PC-9 (cell line): ENCODE measurements at regions of chr5 and their contacts with region 1.

Region 1: GRCh38 chr5:40755407-40756365 is at the start of gene TTC33:
- DNase-seq: peak; percentile 90 to 99
- H3K4me3 ChIP-seq: peak within 1 kb of the TSS; percentile 79
- H3K27ac ChIP-seq: peak within 1 kb of the TSS; percentile 36
- H3K4me1 ChIP-seq: peaks cover 11% of the 10 kb centered on the region
- H3K27me3 ChIP-seq: no peaks in the 10 kb centered on the region
- CTCF ChIP-seq: peak; percentile 76
- total RNA-seq, gene TTC33: 29.4 and 30.2 TPM in 2 replicates

Region 2: DNA sequence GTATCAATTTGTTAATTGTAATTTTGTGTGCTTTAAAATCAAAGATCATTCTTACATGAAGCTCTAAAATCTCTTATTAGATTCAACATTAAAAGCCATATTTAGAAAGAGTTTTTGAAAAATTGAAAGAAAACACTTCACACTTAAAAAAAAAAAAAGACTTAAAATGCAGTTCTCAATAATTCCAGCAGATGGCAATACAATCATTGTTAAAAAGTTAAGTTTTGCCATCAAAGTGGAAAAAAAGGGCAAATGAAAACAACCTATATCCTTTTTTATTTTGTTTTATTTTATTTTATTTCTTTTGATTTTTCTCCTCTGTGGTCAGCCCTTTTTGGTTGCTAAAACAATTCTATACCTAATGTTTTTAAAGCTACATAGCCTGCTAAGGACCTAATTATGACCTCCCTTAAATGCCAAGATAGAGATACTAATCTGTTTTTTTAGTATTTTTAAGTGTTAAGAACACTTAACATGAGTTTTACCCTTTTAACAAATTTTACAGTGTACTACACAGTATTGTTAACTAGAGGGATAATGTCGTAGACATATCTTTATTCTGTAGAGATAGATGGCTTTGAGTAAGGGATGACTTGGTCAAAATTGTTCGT is 1176.7 kb before region 1 on chr5:
- CTCF ChIA-PET with region 1: no interaction called
- POLR2A ChIA-PET with region 1: no interaction called
- intact Hi-C with region 1: loop called (anchors 1 kb)
- DNase-seq: no peak
- H3K4me3 ChIP-seq: no peak overlapping the region
- H3K27ac ChIP-seq: no peak overlapping the region
- H3K4me1 ChIP-seq: no peaks in the 10 kb centered on the region
- H3K27me3 ChIP-seq: no peaks in the 10 kb centered on the region
- CTCF ChIP-seq: peak; percentile 92

Region 3: DNA sequence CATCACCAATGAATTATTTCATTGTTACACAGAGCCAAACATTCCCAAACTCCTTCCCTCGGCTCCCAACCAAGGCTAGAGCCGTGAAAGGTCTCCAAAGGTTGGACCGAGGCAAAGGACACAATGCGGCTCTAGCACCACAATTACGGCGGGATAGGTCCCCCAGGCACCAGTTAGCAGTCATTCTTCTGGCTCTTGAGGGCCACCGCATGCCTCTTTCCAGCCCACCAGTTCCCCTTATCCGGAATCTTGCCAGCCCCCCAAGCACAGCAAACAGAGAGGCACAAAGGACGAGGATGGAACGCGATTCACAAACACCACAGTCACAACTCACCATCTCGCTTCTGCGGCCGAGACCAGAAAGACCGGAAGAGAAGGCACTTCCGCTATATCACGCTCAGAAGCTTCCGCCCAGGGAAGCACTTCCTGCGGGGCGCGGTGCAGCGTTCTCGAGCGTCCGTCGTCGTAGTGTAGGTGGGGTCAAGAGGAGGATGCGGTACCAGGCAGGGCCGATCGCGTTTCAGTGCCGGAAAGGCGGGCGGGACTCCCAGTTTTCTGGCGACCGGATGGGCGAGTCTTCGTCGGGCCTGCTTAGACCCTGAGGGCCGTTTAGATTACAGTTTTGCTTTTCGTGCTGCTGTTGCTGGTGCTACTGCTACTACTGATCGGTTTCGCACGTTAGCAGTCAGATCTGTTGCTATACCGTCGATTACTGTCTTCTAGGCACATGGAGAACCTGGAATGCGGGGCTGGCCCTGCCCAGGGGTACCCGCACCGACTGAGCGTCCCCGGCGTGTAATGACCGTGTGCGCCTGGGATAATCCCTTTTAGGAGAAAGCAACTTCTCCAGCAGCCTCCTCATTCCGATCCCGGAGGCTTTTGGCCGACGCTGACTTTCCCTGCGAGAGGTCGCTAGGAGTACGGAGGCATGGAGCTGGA is 79.4 kb after region 1 on chr5 and contains the start of gene RPL37:
- CTCF ChIA-PET with region 1: no interaction called
- POLR2A ChIA-PET with region 1: no interaction called
- intact Hi-C with region 1: loop called (anchors 1 kb)
- DNase-seq: peak; percentile 97 to 100
- H3K4me3 ChIP-seq: peak within 1 kb of the TSS; percentile 86
- H3K27ac ChIP-seq: peak within 1 kb of the TSS; percentile 96
- H3K4me1 ChIP-seq: peaks cover 43% of the 10 kb centered on the region
- H3K27me3 ChIP-seq: no peaks in the 10 kb centered on the region
- CTCF ChIP-seq: no peak
- total RNA-seq, gene RPL37: 3,889 and 3,938 TPM in 2 replicates

Region 4: GRCh38 chr5:40879163-40879942 is 123.7 kb after region 1 on chr5:
- CTCF ChIA-PET with region 1: interaction called, 8 read pairs
- POLR2A ChIA-PET with region 1: no interaction called
- intact Hi-C with region 1: loop called (anchors 1 kb)
- DNase-seq: peak; percentile 6 to 47
- H3K4me3 ChIP-seq: no peak overlapping the region
- H3K27ac ChIP-seq: no peak overlapping the region
- H3K4me1 ChIP-seq: no peaks in the 10 kb centered on the region
- H3K27me3 ChIP-seq: no peaks in the 10 kb centered on the region
- CTCF ChIP-seq: peak; percentile 90

Region 5: DNA sequence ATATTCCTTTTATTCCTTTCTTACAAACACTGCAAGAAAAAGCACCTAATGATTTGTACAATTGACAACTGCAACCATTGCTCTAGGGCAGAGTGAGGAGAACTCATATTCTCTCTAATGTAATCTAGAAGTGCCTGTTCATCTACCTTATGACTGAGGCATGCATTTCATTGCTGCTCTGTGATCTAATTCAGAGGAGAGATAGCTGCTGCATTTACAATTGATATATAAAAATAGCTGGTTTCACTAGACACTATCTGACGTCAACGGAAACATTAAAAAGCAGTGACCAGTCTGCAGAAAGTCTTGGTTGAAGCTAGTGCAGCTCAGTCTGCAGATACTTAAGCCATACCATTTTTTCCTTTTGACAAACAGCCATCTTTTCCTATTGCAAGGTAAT is 530.5 kb after region 1 on chr5:
- CTCF ChIA-PET with region 1: no interaction called
- POLR2A ChIA-PET with region 1: no interaction called
- intact Hi-C with region 1: no loop called
- DNase-seq: no peak
- H3K4me3 ChIP-seq: no peak overlapping the region
- H3K27ac ChIP-seq: no peak overlapping the region
- H3K4me1 ChIP-seq: no peaks in the 10 kb centered on the region
- H3K27me3 ChIP-seq: no peaks in the 10 kb centered on the region
- CTCF ChIP-seq: no peak

Region 6: GRCh38 chr5:41903892-41904799 is 1148.5 kb after region 1 on chr5 and contains the start of gene RIMOC1:
- CTCF ChIA-PET with region 1: no interaction called
- POLR2A ChIA-PET with region 1: no interaction called
- intact Hi-C with region 1: loop called (anchors 10 kb)
- DNase-seq: peak; percentile 99 to 100
- H3K4me3 ChIP-seq: peak within 1 kb of the TSS; percentile 83
- H3K27ac ChIP-seq: peak within 1 kb of the TSS; percentile 68
- H3K4me1 ChIP-seq: peaks cover 16% of the 10 kb centered on the region
- H3K27me3 ChIP-seq: no peaks in the 10 kb centered on the region
- CTCF ChIP-seq: no peak
- total RNA-seq, gene RIMOC1: 40.1 and 68.6 TPM in 2 replicates